Spleen (tissue), 13 donors: ENCODE measurements at regions of chr2 and their contacts with region 1.

Region 1: DNA sequence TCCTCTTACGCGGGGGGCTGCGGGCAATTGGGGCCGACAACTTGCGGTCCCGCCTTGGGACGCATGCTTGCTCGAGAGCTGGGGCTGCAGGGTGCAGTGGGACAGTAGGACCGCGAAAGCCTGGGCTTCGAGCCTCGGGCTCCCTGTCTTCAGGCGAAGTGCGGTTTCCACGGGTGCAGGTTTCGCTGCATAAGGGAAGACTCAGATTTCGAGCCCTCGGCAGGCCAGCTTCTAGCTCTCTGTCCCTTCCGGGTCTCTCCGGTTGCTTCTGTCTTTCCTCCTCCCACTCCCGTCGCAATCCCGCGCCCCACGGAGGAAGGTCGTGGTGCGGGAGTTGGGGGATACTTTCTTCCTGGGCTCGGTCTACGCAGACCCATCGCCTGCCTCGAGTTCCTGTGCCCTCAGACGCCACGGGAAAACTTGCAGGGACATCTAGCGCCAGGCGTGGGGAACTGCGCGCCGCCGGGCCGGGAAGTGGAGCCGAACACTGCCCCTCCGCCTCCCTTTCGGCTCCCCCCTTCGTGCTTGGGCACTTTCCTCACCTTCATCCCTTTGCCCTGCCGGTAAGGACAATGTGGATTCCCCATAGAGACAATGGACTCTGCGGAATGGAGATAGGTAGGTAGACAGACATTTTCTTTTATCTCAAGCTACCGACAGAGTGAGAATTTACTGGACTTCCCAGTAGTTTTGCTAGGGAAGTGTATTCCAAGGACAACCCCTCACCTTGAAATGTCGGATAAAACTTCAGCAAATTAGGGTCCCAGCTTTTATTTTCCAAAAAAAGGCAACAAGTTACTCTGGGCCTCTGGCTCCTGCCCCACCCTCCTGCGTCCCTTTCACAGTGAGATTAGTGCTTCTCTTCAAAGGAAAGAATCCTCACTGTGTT is 4.2 kb upstream of the HOXD13 start:
- DNase-seq: no peak
- H3K4me3 ChIP-seq: peak overlapping the region in 6 of 8 donors; percentile 6 to 57 (median 14)
- H3K27ac ChIP-seq: no peak overlapping the region
- H3K4me1 ChIP-seq: peaks cover 10 to 58% (median 34%) of the 10 kb centered on the region in 6 donors
- H3K27me3 ChIP-seq: peaks cover 26 to 100% (median 100%) of the 10 kb centered on the region in 7 donors
- CTCF ChIP-seq: peak in 9 of 11 experiments; percentile 29 to 67 (median 49)
- POLR2A ChIP-seq: no peak

Region 2: DNA sequence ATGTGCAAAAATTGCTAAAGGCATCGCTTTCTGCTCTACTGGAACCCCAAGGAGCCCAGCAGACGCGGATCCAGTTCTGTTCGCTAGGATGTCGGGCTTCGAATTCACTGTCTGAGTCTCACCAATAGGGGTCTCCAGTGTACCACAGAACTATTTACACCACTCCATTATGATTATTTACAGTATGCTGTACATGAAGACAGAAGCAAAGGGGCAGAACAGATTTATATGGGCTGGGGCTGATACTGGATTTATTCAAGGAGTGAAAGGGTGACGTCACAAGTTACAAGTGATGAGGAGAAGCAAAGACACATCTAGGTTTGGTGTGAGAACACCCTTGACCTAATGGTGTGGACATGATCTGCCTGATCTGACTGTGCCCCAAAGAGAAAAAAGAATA is 721.5 kb before region 1 on chr2:
- intact Hi-C with region 1: loop called (anchors 5 kb)
- DNase-seq: no peak
- H3K4me3 ChIP-seq: no peak overlapping the region
- H3K27ac ChIP-seq: no peak overlapping the region
- H3K4me1 ChIP-seq: peaks cover 0 to 6% (median 0%) of the 10 kb centered on the region in 6 donors
- H3K27me3 ChIP-seq: peaks cover 0 to 67% (median 15%) of the 10 kb centered on the region in 7 donors
- CTCF ChIP-seq: peak in 9 of 11 experiments; percentile 20 to 71 (median 67)
- POLR2A ChIP-seq: no peak

Region 3: GRCh38 chr2:176317199-176317598 is 228.9 kb after region 1 on chr2:
- intact Hi-C with region 1: no loop called
- DNase-seq: no peak
- H3K4me3 ChIP-seq: no peak overlapping the region
- H3K27ac ChIP-seq: no peak overlapping the region
- H3K4me1 ChIP-seq: no peaks in the 10 kb centered on the region
- H3K27me3 ChIP-seq: no peaks in the 10 kb centered on the region
- CTCF ChIP-seq: no peak
- POLR2A ChIP-seq: no peak

Region 4: GRCh38 chr2:177044671-177045070 is 956.4 kb after region 1 on chr2:
- intact Hi-C with region 1: no loop called
- DNase-seq: no peak
- H3K4me3 ChIP-seq: no peak overlapping the region
- H3K27ac ChIP-seq: no peak overlapping the region
- H3K4me1 ChIP-seq: no peaks in the 10 kb centered on the region
- H3K27me3 ChIP-seq: peaks cover 0 to 6% (median 0%) of the 10 kb centered on the region in 7 donors
- CTCF ChIP-seq: no peak
- POLR2A ChIP-seq: no peak